Left cardiac atrium (tissue), 4 donors: ENCODE measurements at regions of chr18 and their contacts with region 1.

Region 1: GRCh38 chr18:57649556-57650500 is 28.2 kb upstream of the NARS1 start:
- DNase-seq: no peak
- ATAC-seq: peak; percentile 76 to 87

Region 2: GRCh38 chr18:57223144-57223870 is 426.5 kb before region 1 on chr18:
- intact Hi-C with region 1: no loop called
- DNase-seq: no peak
- ATAC-seq: no peak

Region 3: DNA sequence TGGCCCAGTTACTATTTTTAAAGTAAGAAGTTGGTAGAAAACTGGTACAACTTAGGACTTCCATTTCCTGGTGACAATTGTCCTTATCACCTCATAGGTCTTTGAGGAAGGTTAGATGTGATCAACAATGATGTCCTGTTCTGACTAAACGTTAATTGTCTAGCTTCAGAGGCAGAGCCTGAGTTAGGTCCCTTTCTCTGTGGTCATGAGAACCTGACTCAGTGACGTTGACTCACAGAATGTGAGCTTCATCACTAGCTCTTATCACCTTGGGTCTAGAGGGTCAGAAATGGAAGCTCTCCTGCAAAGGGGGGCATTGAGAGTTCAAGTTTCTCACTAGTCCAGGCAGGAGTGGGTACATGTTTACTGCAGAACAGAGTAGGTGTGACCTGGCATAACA is 213.9 kb after region 1 on chr18:
- intact Hi-C with region 1: loop called in 1 of 2 experiments (anchors 10 kb)
- DNase-seq: no peak
- ATAC-seq: no peak

Region 4: GRCh38 chr18:58091099-58091611 is 441.3 kb after region 1 on chr18:
- intact Hi-C with region 1: no loop called
- DNase-seq: no peak
- ATAC-seq: peak in 1 of 2 donors; percentile 83